ENCODE measurements at regions of chr7 and their contacts with region 1.

Region 1: DNA sequence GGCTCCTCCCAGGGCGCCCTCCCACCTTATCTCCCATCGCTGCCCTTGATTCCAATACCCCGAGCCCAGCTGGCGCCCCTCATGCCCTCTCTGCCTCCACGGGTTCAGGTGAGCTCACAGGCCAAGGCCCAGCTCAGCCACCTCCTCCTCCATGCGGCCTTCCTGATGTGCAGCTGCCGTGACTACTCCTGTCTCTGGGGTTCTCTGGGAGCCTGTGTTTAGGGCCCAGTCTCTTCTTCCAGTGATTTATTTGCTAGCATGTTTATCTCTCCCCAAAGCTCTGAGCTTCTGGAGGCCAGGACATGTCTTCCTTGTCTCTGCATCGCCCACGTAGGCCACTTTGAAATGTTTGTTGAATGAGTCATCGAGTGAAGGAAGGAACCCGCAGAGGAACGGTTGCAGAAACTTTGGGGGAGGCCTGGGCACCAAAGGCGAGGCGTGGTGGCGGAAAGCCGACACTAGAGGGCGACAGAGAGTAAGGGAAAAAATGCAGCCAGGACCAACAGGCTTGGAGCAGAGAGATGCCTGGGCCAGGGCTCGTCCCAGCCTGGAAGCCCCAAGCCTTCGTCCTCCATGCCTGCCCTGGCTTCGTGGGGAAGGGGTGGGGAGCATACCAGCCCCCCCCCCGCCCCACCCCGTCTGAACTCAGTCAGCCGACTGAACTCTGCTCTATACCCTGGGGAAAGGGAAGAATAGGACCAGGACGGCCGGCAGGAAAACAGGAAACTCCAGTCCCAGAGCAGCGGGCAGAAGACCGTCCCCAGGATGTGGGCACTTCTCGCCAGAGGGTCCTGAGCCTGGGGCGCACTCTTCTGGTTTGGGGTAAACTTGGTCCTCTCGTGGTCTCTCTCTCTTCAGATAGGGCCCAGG is 10.9 kb upstream of the HSPB1 start:
- DNase-seq: peak; percentile 97
- H3K4me3 ChIP-seq: peak overlapping the region; percentile 32
- H3K27ac ChIP-seq: peak overlapping the region; percentile 82
- H3K4me1 ChIP-seq: peaks cover 29% of the 10 kb centered on the region
- H3K27me3 ChIP-seq: no peaks in the 10 kb centered on the region
- CTCF ChIP-seq: peak; percentile 98

Region 2: DNA sequence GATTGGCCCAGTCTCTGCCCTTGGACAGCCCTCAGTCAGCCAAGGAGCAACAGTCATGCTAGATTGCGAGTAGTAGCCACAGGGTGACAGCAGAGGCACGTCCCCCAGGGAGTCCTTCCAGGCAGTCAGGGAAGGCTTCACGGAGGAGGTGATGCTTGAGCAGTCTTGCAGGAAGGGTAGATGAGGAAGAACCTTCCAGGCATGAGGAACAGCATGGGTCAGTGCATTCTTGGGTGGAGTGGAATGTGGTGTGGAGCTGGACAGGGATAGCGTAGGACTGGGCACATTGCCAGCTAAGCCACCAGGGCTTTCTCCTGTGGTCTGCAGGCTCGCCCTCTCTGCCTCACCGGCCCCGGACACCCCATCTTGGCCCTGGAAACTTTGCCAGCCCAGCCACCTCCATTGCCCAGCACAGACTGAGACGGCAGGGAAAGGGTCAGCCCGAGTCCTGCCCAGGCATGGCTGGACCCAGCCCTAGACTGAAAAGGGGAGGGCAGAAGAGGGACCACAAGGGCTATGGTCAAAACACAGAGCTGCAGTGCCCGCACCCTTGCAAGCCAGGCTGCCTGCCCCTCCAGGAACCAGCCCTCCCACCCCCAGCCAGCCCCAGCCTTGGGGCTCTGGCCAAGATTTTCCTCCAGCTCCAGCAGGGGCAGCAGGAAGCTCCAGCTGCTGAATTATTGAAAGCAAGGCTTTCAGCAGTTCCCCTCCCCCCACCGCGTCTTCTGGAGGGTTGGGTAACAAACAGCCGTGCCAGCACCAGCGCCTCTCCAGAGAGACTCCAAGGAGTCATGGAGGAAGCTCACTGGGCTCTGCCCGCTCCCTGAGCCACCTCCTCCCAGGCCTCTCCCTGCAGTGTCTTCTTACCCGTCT is 71.2 kb before region 1 on chr7:
- CTCF ChIA-PET with region 1: no interaction called
- POLR2A ChIA-PET with region 1: no interaction called
- intact Hi-C with region 1: no loop called
- DNase-seq: peak; percentile 82
- H3K4me3 ChIP-seq: no peak overlapping the region
- H3K27ac ChIP-seq: no peak overlapping the region
- H3K4me1 ChIP-seq: peaks cover 6% of the 10 kb centered on the region
- H3K27me3 ChIP-seq: peaks cover 3% of the 10 kb centered on the region
- CTCF ChIP-seq: no peak

Region 3: DNA sequence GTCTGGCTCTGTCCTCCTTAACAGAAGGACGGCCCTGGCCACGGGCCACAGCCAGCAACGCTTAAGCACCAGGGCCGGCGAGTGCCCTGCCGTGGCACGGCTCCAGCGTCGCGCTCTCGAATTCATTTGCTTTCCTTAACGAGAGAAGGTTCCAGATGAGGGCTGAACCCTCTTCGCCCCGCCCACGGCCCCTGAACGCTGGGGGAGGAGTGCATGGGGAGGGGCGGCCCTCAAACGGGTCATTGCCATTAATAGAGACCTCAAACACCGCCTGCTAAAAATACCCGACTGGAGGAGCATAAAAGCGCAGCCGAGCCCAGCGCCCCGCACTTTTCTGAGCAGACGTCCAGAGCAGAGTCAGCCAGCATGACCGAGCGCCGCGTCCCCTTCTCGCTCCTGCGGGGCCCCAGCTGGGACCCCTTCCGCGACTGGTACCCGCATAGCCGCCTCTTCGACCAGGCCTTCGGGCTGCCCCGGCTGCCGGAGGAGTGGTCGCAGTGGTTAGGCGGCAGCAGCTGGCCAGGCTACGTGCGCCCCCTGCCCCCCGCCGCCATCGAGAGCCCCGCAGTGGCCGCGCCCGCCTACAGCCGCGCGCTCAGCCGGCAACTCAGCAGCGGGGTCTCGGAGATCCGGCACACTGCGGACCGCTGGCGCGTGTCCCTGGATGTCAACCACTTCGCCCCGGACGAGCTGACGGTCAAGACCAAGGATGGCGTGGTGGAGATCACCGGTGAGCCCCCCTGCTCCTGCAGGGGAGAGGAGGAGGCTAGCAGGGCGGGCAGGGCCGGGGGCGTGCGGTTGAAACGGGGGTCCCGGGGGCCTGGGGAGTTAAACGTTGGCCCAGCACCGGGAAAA is 11.0 kb after region 1 on chr7 and contains the start of gene HSPB1:
- CTCF ChIA-PET with region 1: interaction called, 4 read pairs
- POLR2A ChIA-PET with region 1: no interaction called
- intact Hi-C with region 1: loop called (anchors 1 kb)
- DNase-seq: peak; percentile 90
- H3K4me3 ChIP-seq: peak within 1 kb of the TSS; percentile 83
- H3K27ac ChIP-seq: peak within 1 kb of the TSS; percentile 85
- H3K4me1 ChIP-seq: peaks cover 7% of the 10 kb centered on the region
- H3K27me3 ChIP-seq: no peaks in the 10 kb centered on the region
- CTCF ChIP-seq: no peak
- total RNA-seq, gene HSPB1: 354 and 375 TPM in 2 replicates

Region 4: DNA sequence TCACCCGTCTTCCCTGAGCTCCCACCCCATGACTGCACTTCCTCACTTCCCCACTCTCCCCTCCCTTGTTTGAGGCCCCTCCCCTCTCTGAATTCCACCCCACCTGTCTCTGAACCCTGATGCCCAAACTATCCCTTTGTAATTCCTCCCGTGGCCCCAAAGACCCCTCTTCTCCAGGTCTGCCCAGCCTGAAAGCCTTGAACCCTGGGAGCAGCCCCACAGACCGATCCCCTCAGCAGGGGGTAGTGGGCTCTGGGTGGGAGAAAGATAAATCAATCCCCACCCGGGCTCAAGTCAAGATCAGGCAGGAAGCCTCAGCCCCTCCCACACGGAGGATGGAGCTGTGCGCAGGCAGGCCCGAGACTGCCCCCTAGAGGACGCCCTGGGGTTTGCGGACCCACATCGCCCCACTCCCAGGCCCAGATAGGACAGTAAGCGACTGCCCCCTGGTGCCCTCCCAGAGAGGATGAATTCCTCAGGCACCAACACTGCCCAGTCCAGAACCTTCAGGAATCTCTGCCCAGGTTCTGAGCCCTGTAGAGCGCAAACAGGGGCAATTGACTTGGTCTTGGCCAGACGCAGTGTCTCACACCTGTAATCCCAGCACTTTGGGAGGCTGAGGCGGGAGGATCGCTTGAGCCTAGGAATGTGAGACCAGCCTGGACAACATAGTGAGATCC is 22.6 kb after region 1 on chr7:
- CTCF ChIA-PET with region 1: interaction called, 17 read pairs
- POLR2A ChIA-PET with region 1: no interaction called
- intact Hi-C with region 1: loop called (anchors 1 kb)
- DNase-seq: peak; percentile 95
- H3K4me3 ChIP-seq: no peak overlapping the region
- H3K27ac ChIP-seq: no peak overlapping the region
- H3K4me1 ChIP-seq: peaks cover 19% of the 10 kb centered on the region
- H3K27me3 ChIP-seq: no peaks in the 10 kb centered on the region
- CTCF ChIP-seq: peak; percentile 100

Measured in A673 (cell line).